Esophagus muscularis mucosa (tissue), 4 donors: ENCODE measurements at regions of chr16 and their contacts with region 1.

Region 1: GRCh38 chr16:81006814-81007696 is at the starts of genes CENPN and CMC2:
- DNase-seq: peak; percentile 100
- H3K4me3 ChIP-seq: peak within 1 kb of the TSS; percentile 70 to 100 (median 85)
- H3K27ac ChIP-seq: peak within 1 kb of the TSS; percentile 95 to 100 (median 98)
- H3K4me1 ChIP-seq: peaks cover 25 to 39% (median 34%) of the 10 kb centered on the region in 4 donors
- H3K27me3 ChIP-seq: no peaks in the 10 kb centered on the region
- CTCF ChIP-seq: peak in 1 of 3 experiments; percentile 26
- EP300 ChIP-seq: no peak
- POLR2A ChIP-seq: peak; percentile 76
- total RNA-seq, gene CENPN: 5.8 to 9.6 (median 6.6) TPM
- total RNA-seq, gene CMC2: 29.7 to 78.1 (median 41.9) TPM

Region 2: GRCh38 chr16:81077076-81077940 is 70.3 kb after region 1 on chr16 and contains the start of gene C16orf46:
- intact Hi-C with region 1: loop called (anchors 10 kb)
- DNase-seq: peak; percentile 100
- H3K4me3 ChIP-seq: peak within 1 kb of the TSS; percentile 63 to 81 (median 73)
- H3K27ac ChIP-seq: peak within 1 kb of the TSS; percentile 89 to 99 (median 94)
- H3K4me1 ChIP-seq: peaks cover 6 to 13% (median 11%) of the 10 kb centered on the region in 4 donors
- H3K27me3 ChIP-seq: no peaks in the 10 kb centered on the region
- CTCF ChIP-seq: peak in 1 of 3 experiments; percentile 4
- EP300 ChIP-seq: no peak
- POLR2A ChIP-seq: peak; percentile 71
- total RNA-seq, gene C16orf46: 1.6 to 2.7 TPM in 2 of 4 donors, not detected in the others